Naive thymus-derived CD4-positive, alpha-beta T cell (primary cell): ENCODE measurements at regions of chr10 and their contacts with region 1.

Region 1: GRCh38 chr10:89793649-89794254 is 92.4 kb downstream of the KIF20B start:
- DNase-seq: peak in 7 of 9 donors; percentile 19 to 58 (median 42)
- ATAC-seq: peak; percentile 76
- H3K4me3 ChIP-seq: no peak overlapping the region
- H3K4me3 Mint-ChIP-seq: no peak overlapping the region
- H3K27ac ChIP-seq: no peak overlapping the region
- H3K27ac Mint-ChIP-seq: no peak overlapping the region
- H3K4me1 ChIP-seq: no peaks in the 10 kb centered on the region
- H3K4me1 Mint-ChIP-seq: peaks cover 0 to 7% (median 0%) of the 10 kb centered on the region in 7 donors
- H3K27me3 ChIP-seq: no peaks in the 10 kb centered on the region
- H3K27me3 Mint-ChIP-seq: peaks cover 4 to 17% (median 14%) of the 10 kb centered on the region in 5 donors

Region 2: DNA sequence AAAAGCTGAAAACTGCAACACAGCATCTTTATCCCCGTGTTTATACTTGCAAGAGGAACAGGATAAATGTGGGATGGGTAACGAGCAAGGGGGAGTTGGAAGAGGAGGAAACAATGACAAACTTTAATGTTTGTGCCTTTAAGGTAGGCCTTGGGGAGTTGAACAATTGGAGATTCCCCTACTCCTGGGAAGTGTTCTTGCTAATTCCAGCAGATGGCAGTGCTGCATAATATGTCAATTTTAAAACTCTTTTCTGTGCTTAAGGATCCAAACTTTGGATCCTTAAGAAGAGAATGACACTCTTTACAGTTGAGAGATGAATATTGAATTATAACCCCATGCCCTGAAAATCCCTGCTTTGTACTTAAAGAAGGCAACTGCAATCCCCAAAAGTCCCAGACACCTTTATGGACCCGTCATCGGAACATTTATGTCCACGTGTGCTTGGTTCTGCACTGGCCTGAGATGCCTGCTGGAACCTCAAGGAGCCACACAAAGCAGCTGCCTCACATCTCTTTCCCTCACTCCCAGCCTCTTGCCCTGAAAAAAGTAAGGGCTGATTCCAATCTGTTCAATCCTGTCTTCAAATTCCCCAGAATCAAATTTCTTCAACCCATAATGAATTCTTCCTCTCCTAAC is 367.4 kb before region 1 on chr10:
- CTCF ChIA-PET with region 1: no interaction called
- POLR2A ChIA-PET with region 1: no interaction called
- intact Hi-C with region 1: loop called in 1 of 2 experiments (anchors 2 kb)
- DNase-seq: peak in 4 of 9 donors; percentile 23 to 38 (median 28)
- ATAC-seq: peak; percentile 81
- H3K4me3 ChIP-seq: no peak overlapping the region
- H3K4me3 Mint-ChIP-seq: no peak overlapping the region
- H3K27ac ChIP-seq: no peak overlapping the region
- H3K27ac Mint-ChIP-seq: no peak overlapping the region
- H3K4me1 ChIP-seq: no peaks in the 10 kb centered on the region
- H3K4me1 Mint-ChIP-seq: peaks cover under 1 to 8% (median 3%) of the 10 kb centered on the region in 7 donors
- H3K27me3 ChIP-seq: no peaks in the 10 kb centered on the region
- H3K27me3 Mint-ChIP-seq: peaks cover 0 to 16% (median 4%) of the 10 kb centered on the region in 5 donors

Region 3: DNA sequence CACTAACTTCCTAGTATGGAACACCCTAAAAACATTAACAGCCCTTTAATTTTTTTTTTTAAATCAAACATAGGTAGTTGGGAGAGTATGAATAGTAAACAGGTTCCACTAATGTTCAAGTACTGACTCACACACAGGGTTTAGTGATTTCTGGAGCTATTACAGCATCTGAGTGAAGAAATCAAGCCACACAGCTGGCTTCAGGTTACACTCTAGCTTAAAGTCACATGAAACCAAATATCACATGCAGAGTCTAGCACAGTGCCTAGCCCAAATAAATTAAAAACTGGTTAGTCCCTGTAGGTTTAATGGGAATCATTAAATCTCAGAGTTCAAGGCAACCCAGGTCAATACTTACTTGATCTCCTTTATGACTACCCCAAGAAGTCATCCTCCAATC is 160.3 kb before region 1 on chr10:
- CTCF ChIA-PET with region 1: no interaction called
- POLR2A ChIA-PET with region 1: no interaction called
- intact Hi-C with region 1: no loop called
- DNase-seq: no peak
- ATAC-seq: no peak
- H3K4me3 ChIP-seq: no peak overlapping the region
- H3K4me3 Mint-ChIP-seq: no peak overlapping the region
- H3K27ac ChIP-seq: no peak overlapping the region
- H3K27ac Mint-ChIP-seq: no peak overlapping the region
- H3K4me1 ChIP-seq: no peaks in the 10 kb centered on the region
- H3K4me1 Mint-ChIP-seq: peaks cover 0 to 3% (median 0%) of the 10 kb centered on the region in 7 donors
- H3K27me3 ChIP-seq: no peaks in the 10 kb centered on the region
- H3K27me3 Mint-ChIP-seq: no peaks in the 10 kb centered on the region

Region 4: GRCh38 chr10:89738551-89739209 is 55.1 kb before region 1 on chr10:
- CTCF ChIA-PET with region 1: no interaction called
- POLR2A ChIA-PET with region 1: no interaction called
- intact Hi-C with region 1: no loop called
- DNase-seq: no peak
- ATAC-seq: peak; percentile 54
- H3K4me3 ChIP-seq: no peak overlapping the region
- H3K4me3 Mint-ChIP-seq: peak overlapping the region in 1 of 10 donors; percentile 77
- H3K27ac ChIP-seq: no peak overlapping the region
- H3K27ac Mint-ChIP-seq: peak overlapping the region in 1 of 9 donors; percentile 90
- H3K4me1 ChIP-seq: no peaks in the 10 kb centered on the region
- H3K4me1 Mint-ChIP-seq: peaks cover 0 to 47% (median 0%) of the 10 kb centered on the region in 7 donors
- H3K27me3 ChIP-seq: no peaks in the 10 kb centered on the region
- H3K27me3 Mint-ChIP-seq: no peaks in the 10 kb centered on the region

Region 5: GRCh38 chr10:89973326-89973725 is 179.6 kb after region 1 on chr10:
- CTCF ChIA-PET with region 1: no interaction called
- POLR2A ChIA-PET with region 1: no interaction called
- intact Hi-C with region 1: loop called in 1 of 2 experiments (anchors 10 kb)
- DNase-seq: no peak
- ATAC-seq: no peak
- H3K4me3 ChIP-seq: no peak overlapping the region
- H3K4me3 Mint-ChIP-seq: no peak overlapping the region
- H3K27ac ChIP-seq: no peak overlapping the region
- H3K27ac Mint-ChIP-seq: no peak overlapping the region
- H3K4me1 ChIP-seq: no peaks in the 10 kb centered on the region
- H3K4me1 Mint-ChIP-seq: peaks cover 0 to 11% (median 8%) of the 10 kb centered on the region in 7 donors
- H3K27me3 ChIP-seq: no peaks in the 10 kb centered on the region
- H3K27me3 Mint-ChIP-seq: peaks cover 0 to 19% (median 0%) of the 10 kb centered on the region in 5 donors

Region 6: GRCh38 chr10:90138844-90139243 is 345.1 kb after region 1 on chr10:
- CTCF ChIA-PET with region 1: no interaction called
- POLR2A ChIA-PET with region 1: no interaction called
- intact Hi-C with region 1: loop called (anchors 1 to 5 kb)
- DNase-seq: no peak
- ATAC-seq: no peak
- H3K4me3 ChIP-seq: no peak overlapping the region
- H3K4me3 Mint-ChIP-seq: no peak overlapping the region
- H3K27ac ChIP-seq: no peak overlapping the region
- H3K27ac Mint-ChIP-seq: no peak overlapping the region
- H3K4me1 ChIP-seq: no peaks in the 10 kb centered on the region
- H3K4me1 Mint-ChIP-seq: peaks cover 0 to 1% (median 0%) of the 10 kb centered on the region in 7 donors
- H3K27me3 ChIP-seq: no peaks in the 10 kb centered on the region
- H3K27me3 Mint-ChIP-seq: peaks cover 0 to 10% (median 0%) of the 10 kb centered on the region in 5 donors

Region 7: GRCh38 chr10:90787393-90788198 is 993.8 kb after region 1 on chr10:
- CTCF ChIA-PET with region 1: interaction called, 4 read pairs
- POLR2A ChIA-PET with region 1: no interaction called
- intact Hi-C with region 1: loop called (anchors 1 to 2 kb)
- DNase-seq: peak in 5 of 9 donors; percentile 2 to 24 (median 15)
- ATAC-seq: peak; percentile 37
- H3K4me3 ChIP-seq: no peak overlapping the region
- H3K4me3 Mint-ChIP-seq: no peak overlapping the region
- H3K27ac ChIP-seq: no peak overlapping the region
- H3K27ac Mint-ChIP-seq: no peak overlapping the region
- H3K4me1 ChIP-seq: no peaks in the 10 kb centered on the region
- H3K4me1 Mint-ChIP-seq: peaks cover 0 to 3% (median 0%) of the 10 kb centered on the region in 7 donors
- H3K27me3 ChIP-seq: no peaks in the 10 kb centered on the region
- H3K27me3 Mint-ChIP-seq: peaks cover under 1 to 15% (median 9%) of the 10 kb centered on the region in 5 donors